ENCODE measurements at regions of chr16 and their contacts with region 1.

Region 1: DNA sequence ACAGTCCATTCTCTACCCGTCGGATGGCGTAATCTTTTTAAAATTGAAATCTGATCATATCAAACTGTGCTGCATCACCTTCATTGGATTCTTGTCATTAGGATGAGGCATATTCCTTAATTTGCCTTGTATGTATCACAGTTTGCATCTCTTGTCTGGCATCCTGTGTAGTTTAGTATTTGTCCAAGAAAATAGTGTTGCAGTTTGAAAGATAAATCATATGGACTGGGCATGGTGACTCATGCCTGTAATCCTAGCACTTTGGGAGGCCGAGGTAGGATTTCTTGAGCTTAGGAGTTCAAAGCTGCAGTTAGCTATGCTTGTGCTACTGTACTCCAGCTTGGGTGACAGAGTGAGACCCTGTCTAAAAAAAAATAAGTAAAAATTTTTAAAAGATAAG is 5.8 kb upstream of the RSL1D1 start:
- DNase-seq: peak; percentile 70
- ATAC-seq: peak; percentile 87
- H3K4me3 ChIP-seq: no peak overlapping the region
- H3K27ac ChIP-seq: no peak overlapping the region
- H3K4me1 ChIP-seq: no peaks in the 10 kb centered on the region; the same call in 1 of the 2 replicates
- H3K27me3 ChIP-seq: no peaks in the 10 kb centered on the region
- CTCF ChIP-seq: no peak
- POLR2A ChIP-seq: no peak
- RAD21 ChIP-seq: no peak

Region 2: GRCh38 chr16:11783319-11784037 is 73.7 kb before region 1 on chr16:
- CTCF ChIA-PET with region 1: no interaction called
- POLR2A ChIA-PET with region 1: no interaction called
- dilution Hi-C with region 1: no loop called
- in situ Hi-C with region 1: no loop called
- intact Hi-C with region 1: no loop called
- DNase-seq: peak; percentile 45
- ATAC-seq: peak; percentile 43
- H3K4me3 ChIP-seq: peak overlapping the region; percentile 28; the same call in 1 of the 2 replicates
- H3K27ac ChIP-seq: peak overlapping the region; percentile 92
- H3K4me1 ChIP-seq: peaks cover 27% of the 10 kb centered on the region
- H3K27me3 ChIP-seq: no peaks in the 10 kb centered on the region
- CTCF ChIP-seq: no peak
- POLR2A ChIP-seq: no peak
- RAD21 ChIP-seq: no peak

Region 3: DNA sequence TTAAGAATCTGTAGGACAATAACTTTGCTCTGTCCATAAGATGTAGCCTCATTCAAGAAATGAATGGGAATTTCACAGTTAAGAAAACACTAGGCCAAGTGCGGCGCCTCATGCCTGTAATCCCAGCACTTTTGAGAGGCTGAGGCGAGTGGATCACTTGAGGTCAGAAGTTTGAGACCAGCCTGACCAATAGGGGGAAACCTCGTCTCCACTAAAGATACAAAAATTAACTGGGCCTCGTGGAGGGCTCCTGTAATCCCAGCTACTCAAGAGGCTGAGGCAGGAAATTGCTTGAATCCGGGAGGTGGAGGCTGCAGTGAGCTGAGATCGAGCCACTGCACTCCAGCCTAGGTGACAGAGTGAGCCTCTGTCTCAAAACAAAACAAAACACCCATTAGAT is 14.0 kb after region 1 on chr16:
- CTCF ChIA-PET with region 1: no interaction called
- POLR2A ChIA-PET with region 1: interaction called, 17 read pairs
- dilution Hi-C with region 1: no loop called
- in situ Hi-C with region 1: no loop called
- intact Hi-C with region 1: no loop called
- DNase-seq: peak; percentile 30
- ATAC-seq: peak; percentile 50; the same call in 1 of the 2 replicates
- H3K4me3 ChIP-seq: no peak overlapping the region
- H3K27ac ChIP-seq: no peak overlapping the region
- H3K4me1 ChIP-seq: peaks cover 4% of the 10 kb centered on the region; the same call in 1 of the 2 replicates
- H3K27me3 ChIP-seq: no peaks in the 10 kb centered on the region
- CTCF ChIP-seq: 0 out of 2 replicates have a peak, but pooled peaks have one; percentile 7
- POLR2A ChIP-seq: no peak
- RAD21 ChIP-seq: no peak